Activated CD8-positive, alpha-beta T cell treated with anti-CD3 and anti-CD28 coated beads, Interleukin-2, amount 10 ng/mL, durations not matched to agents 7 days and 5 days (primary cell): ENCODE measurements at regions of chr3 and their contacts with region 1.

Region 1: DNA sequence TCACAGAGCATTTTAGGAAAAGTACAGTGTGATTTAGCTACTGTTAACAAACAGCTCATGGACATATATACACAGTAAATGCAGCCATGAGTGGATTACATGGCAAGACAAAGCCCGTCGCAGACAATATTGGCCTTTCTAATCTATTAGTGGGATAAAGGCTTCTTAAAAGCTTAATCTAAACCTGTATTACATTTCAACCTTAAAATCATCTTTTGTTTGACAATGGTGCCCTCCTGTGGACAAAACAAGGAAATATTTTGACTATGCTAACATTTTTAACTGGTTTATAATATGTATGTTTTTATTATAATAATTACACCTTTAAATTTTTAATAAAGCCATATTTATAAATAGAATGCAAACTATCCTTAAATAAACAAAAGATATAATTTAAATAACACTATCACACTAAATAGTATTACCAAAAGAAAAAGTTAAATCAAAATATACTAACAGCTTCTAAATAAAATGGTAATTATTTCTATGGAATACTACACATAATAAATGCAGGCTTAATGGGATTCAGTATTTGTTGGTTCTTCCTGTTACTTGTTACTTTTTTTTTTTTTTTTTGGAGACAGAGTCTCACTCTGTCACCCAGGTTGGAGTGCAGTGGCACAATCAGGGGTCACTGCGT is 38.6 kb downstream of the TAFA4 start:
- DNase-seq: no peak
- ATAC-seq: no peak
- H3K4me3 Mint-ChIP-seq: no peak overlapping the region
- H3K27ac Mint-ChIP-seq: no peak overlapping the region
- H3K4me1 Mint-ChIP-seq: no peaks in the 10 kb centered on the region
- H3K27me3 Mint-ChIP-seq: peaks cover 13% of the 10 kb centered on the region

Region 2: DNA sequence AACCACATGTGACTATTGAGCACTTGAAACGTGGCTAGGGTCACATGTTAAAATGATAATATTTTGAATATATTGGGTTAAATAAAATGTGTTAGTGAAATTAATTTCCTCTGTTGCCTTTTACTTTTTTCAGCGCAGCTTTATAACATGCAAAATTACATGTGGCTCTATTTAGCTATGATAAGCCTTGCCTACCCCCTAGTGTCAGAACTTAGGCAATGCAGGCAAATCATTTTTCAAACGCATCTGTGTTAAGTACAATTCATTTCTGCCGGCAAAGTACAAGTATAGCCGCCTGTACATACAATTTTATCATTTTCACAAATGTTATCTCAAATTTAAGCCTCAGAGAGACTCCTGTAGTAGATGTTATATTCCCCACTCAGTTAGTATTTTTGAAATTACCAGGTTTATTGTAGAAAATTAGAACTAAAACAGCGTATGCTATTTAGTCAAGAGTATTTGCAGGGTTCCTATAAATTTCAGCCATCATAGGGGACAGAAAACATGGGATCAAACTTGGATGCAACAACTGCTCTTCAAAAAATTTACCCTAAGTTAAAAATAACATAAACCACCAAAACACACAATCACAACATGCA is 17.5 kb before region 1 on chr3:
- CTCF ChIA-PET with region 1: interaction called, 10 read pairs
- POLR2A ChIA-PET with region 1: no interaction called
- DNase-seq: peak; percentile 45
- ATAC-seq: peak; percentile 60
- H3K4me3 Mint-ChIP-seq: no peak overlapping the region
- H3K27ac Mint-ChIP-seq: no peak overlapping the region
- H3K4me1 Mint-ChIP-seq: no peaks in the 10 kb centered on the region
- H3K27me3 Mint-ChIP-seq: peaks cover 19% of the 10 kb centered on the region

Region 3: DNA sequence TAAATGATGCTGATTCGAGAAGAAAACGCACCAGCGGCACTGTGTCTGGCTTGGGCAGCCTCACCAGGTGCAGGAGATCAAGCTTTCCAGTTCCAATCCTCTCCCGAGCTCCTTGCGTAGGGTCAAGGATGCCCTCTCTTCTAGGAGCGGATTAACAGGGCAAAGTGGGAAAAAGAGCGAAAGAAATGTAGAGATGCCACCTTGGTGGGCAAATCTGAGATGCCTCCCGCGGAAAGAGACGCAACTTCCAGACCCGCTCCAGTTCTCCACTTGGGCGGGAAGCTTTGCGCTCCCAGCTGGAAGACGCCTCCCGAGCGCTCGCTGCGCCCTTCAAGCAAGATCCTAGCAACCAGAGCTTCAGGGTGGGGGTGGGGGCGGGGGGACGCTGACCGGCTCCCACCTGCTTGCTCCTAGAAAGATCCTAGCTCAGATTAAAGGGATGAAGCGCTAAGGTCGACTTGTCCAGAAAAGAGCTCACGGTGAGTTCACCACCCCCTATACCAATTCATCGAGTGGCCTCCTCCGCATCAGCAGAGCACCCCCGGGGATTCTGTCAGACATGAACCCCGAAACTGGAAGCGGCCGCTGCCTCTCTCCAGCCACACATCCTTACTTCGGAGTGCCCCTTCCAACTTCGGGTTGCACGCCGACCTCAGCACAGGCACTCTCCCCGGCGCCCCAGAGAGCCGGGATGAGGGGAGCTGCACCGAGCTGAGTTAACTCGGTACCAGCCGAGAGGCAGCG is 37.9 kb after region 1 on chr3:
- CTCF ChIA-PET with region 1: no interaction called
- POLR2A ChIA-PET with region 1: no interaction called
- DNase-seq: no peak
- ATAC-seq: no peak
- H3K4me3 Mint-ChIP-seq: no peak overlapping the region
- H3K27ac Mint-ChIP-seq: no peak overlapping the region
- H3K4me1 Mint-ChIP-seq: no peaks in the 10 kb centered on the region
- H3K27me3 Mint-ChIP-seq: peaks cover 71% of the 10 kb centered on the region